ENCODE measurements at regions of chr10 and their contacts with region 1.

Region 1: GRCh38 chr10:14959276-14960057 is at the start of gene MEIG1:
- DNase-seq: peak; percentile 97
- H3K27ac ChIP-seq: peak within 1 kb of the TSS; percentile 100
- CTCF ChIP-seq: no peak

Region 2: GRCh38 chr10:15112657-15113056 is 153.2 kb after region 1 on chr10:
- CTCF ChIA-PET with region 1: interaction called, 3 read pairs
- POLR2A ChIA-PET with region 1: interaction called, 10 read pairs
- DNase-seq: no peak
- H3K27ac ChIP-seq: no peak overlapping the region
- CTCF ChIP-seq: no peak